Mucosa of descending colon (tissue), 3 donors: ENCODE measurements at regions of chr14 and their contacts with region 1.

Region 1: GRCh38 chr14:61456720-61457119 is 135.3 kb downstream of the PRKCH start:
- DNase-seq: peak; percentile 64 to 97 (median 64)
- ATAC-seq: peak; percentile 81
- H3K4me3 ChIP-seq: no peak overlapping the region
- H3K4me1 ChIP-seq: peaks cover under 1% of the 10 kb centered on the region
- CTCF ChIP-seq: peak; percentile 69

Region 2: DNA sequence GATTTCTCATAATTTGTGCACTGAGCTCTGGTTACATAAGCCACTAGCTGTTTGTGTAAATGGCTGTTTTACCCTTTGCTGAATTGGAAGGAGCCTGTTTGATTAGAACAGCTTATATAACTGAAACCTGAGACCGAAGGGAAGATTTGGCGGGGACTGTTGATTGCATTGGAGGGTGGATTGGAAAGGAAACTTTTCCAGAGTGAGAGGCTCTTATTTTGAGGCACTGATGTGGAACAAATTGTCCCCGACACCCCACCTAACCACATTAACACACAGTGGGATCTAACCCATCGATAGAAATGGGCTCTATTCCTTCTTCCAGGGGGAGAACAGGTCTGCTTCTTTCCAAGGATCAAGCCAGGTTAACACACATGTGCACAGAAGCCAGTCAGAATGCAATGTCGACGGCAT is 227.2 kb before region 1 on chr14:
- intact Hi-C with region 1: no loop called
- DNase-seq: no peak
- ATAC-seq: no peak
- H3K4me3 ChIP-seq: no peak overlapping the region
- H3K4me1 ChIP-seq: no peaks in the 10 kb centered on the region
- CTCF ChIP-seq: no peak

Region 3: GRCh38 chr14:61837336-61838229 is 380.9 kb after region 1 on chr14:
- intact Hi-C with region 1: loop called (anchors 5 kb)
- DNase-seq: peak; percentile 57 to 88 (median 77)
- ATAC-seq: peak; percentile 99
- H3K4me3 ChIP-seq: no peak overlapping the region
- H3K4me1 ChIP-seq: no peaks in the 10 kb centered on the region
- CTCF ChIP-seq: peak; percentile 82